ENCODE measurements at regions of chr11 and their contacts with region 1.

Region 1: GRCh38 chr11:65274735-65275682 is 13.2 kb downstream of the POLA2 start:
- DNase-seq: no peak
- ATAC-seq: peak; percentile 84
- H3K4me3 ChIP-seq: no peak overlapping the region
- H3K27ac ChIP-seq: no peak overlapping the region
- H3K4me1 ChIP-seq: peaks cover 18% of the 10 kb centered on the region; the same call in 1 of the 2 replicates
- H3K27me3 ChIP-seq: no peaks in the 10 kb centered on the region
- CTCF ChIP-seq: peak; percentile 92

Region 2: GRCh38 chr11:64803163-64803845 is 471.7 kb before region 1 on chr11 and contains the start of gene MAP4K2:
- CTCF ChIA-PET with region 1: interaction called, 14 read pairs
- POLR2A ChIA-PET with region 1: no interaction called
- in situ Hi-C with region 1: no loop called
- intact Hi-C with region 1: no loop called
- DNase-seq: peak; percentile 70
- ATAC-seq: peak; percentile 92
- H3K4me3 ChIP-seq: peak within 1 kb of the TSS; percentile 75 to 86
- H3K27ac ChIP-seq: peak within 1 kb of the TSS; percentile 81
- H3K4me1 ChIP-seq: peaks cover 18% of the 10 kb centered on the region
- H3K27me3 ChIP-seq: no peaks in the 10 kb centered on the region
- CTCF ChIP-seq: no peak; the same call in 1 of the 2 replicates
- total RNA-seq, gene MAP4K2: 46.4 TPM

Region 3: GRCh38 chr11:65095974-65096806 is 178.8 kb before region 1 on chr11 and contains the start of gene VPS51:
- CTCF ChIA-PET with region 1: no interaction called
- POLR2A ChIA-PET with region 1: no interaction called
- in situ Hi-C with region 1: no loop called
- intact Hi-C with region 1: no loop called
- DNase-seq: no peak
- ATAC-seq: peak; percentile 97
- H3K4me3 ChIP-seq: peak within 1 kb of the TSS; percentile 63 to 88
- H3K27ac ChIP-seq: peak within 1 kb of the TSS; percentile 80
- H3K4me1 ChIP-seq: peaks cover 5% of the 10 kb centered on the region
- H3K27me3 ChIP-seq: no peaks in the 10 kb centered on the region
- CTCF ChIP-seq: no peak
- total RNA-seq, gene VPS51: 101 TPM

Region 4: GRCh38 chr11:65169164-65169641 is 105.8 kb before region 1 on chr11:
- CTCF ChIA-PET with region 1: no interaction called
- POLR2A ChIA-PET with region 1: no interaction called
- in situ Hi-C with region 1: no loop called
- intact Hi-C with region 1: no loop called
- DNase-seq: no peak
- ATAC-seq: peak; percentile 47; the same call in 1 of the 2 replicates
- H3K4me3 ChIP-seq: no peak overlapping the region
- H3K27ac ChIP-seq: peak overlapping the region; percentile 13; the same call in 1 of the 2 replicates
- H3K4me1 ChIP-seq: 0 out of 2 replicates have a peak, but pooled peaks cover 10% of the 10 kb centered on the region
- H3K27me3 ChIP-seq: no peaks in the 10 kb centered on the region
- CTCF ChIP-seq: no peak

Region 5: DNA sequence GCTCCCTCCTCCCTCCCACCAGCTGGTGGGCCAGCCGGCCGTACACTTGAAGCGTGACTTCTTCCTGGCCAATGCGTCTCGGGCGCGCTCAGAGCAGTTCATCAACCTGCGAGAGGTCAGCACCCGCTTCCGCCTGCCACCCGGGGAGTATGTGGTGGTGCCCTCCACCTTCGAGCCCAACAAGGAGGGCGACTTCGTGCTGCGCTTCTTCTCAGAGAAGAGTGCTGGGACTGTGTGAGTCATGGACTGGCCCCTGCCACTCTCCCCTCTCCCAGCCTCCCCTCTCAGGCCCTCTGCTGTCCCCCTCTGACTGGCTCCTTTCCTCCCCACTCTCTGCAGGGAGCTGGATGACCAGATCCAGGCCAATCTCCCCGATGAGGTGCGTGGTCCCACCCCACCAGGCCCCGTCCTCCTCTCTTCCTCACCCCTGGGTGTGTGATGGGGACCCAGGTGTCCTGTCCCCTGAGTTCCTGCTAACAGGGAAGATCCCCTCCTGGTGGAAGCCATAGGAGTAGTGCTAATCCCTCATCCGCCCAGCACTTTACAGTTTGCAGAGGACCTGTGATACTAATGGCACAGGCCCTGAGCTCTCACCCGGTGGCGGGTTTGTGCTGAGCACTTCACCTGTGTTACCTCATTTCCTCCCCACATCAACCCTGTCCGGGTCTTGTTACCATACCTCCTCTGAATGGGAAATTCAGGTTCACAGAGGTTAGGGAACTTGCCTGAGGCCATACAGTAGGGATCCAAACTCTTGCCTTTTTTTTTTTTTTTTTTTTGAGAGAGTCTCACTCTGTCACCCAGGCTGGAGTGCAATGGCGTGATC is 68.4 kb before region 1 on chr11:
- CTCF ChIA-PET with region 1: no interaction called
- POLR2A ChIA-PET with region 1: interaction called, 16 read pairs
- in situ Hi-C with region 1: no loop called
- intact Hi-C with region 1: no loop called
- DNase-seq: no peak
- ATAC-seq: no peak
- H3K4me3 ChIP-seq: no peak overlapping the region
- H3K27ac ChIP-seq: no peak overlapping the region
- H3K4me1 ChIP-seq: no peaks in the 10 kb centered on the region
- H3K27me3 ChIP-seq: no peaks in the 10 kb centered on the region
- CTCF ChIP-seq: no peak

Region 6: DNA sequence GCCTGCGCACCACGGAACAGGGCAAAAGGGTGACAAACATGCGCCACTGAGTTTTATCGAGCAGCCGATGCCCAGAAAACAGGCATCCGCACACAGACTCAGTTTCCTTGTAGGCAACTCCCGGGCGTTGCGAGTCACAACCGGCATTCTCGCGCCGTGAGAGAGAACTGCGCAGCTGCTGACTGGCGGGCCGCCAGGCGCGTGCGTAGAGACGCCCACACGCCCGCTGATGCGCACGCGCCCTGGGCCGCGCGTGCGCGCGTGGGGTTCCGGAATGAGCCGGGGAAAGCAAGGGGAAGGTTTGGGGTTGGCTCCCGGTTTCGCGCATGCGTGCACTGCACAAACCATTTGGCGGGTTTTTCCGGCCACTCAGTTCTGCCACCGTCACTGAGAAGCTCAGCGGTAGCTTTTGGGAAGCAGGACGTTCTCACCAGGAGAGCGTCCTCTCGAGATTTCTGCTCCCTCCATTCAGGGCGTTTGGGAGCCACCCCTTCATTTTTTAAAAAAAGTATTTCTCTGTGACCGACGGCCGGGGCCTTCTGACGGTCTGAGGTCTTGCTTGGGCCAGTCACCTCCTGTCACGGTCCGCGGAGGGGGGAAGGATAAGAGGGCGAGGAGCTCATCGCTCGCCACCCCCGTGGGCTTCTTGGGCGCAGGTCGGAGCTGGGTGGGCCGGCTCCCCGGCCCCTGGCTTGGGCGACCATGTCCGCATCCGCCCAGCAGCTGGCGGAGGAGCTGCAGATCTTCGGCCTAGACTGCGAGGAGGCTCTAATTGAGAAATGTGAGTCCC is 13.2 kb before region 1 on chr11 and contains the start of gene POLA2:
- CTCF ChIA-PET with region 1: interaction called, 6 read pairs
- POLR2A ChIA-PET with region 1: interaction called, 10 read pairs
- in situ Hi-C with region 1: no loop called
- intact Hi-C with region 1: no loop called
- DNase-seq: peak; percentile 92
- ATAC-seq: peak; percentile 94
- H3K4me3 ChIP-seq: peak within 1 kb of the TSS; percentile 80 to 93
- H3K27ac ChIP-seq: peak within 1 kb of the TSS; percentile 99
- H3K4me1 ChIP-seq: peaks cover 21% of the 10 kb centered on the region
- H3K27me3 ChIP-seq: no peaks in the 10 kb centered on the region
- CTCF ChIP-seq: no peak
- total RNA-seq, gene POLA2: 39.0 TPM

Measured in Panc1 (cell line).